ENCODE measurements at regions of chr9 and their contacts with region 1.

Region 1: GRCh38 chr9:122810306-122810946 is 10.5 kb downstream of the OR1K1 start:
- DNase-seq: peak; percentile 81

Region 2: GRCh38 chr9:122092611-122093506 is 717.6 kb before region 1 on chr9 and contains the start of gene TTLL11:
- intact Hi-C with region 1: loop called (anchors 10 kb)
- DNase-seq: peak; percentile 99
- total RNA-seq, gene TTLL11: 12.6 TPM

Region 3: DNA sequence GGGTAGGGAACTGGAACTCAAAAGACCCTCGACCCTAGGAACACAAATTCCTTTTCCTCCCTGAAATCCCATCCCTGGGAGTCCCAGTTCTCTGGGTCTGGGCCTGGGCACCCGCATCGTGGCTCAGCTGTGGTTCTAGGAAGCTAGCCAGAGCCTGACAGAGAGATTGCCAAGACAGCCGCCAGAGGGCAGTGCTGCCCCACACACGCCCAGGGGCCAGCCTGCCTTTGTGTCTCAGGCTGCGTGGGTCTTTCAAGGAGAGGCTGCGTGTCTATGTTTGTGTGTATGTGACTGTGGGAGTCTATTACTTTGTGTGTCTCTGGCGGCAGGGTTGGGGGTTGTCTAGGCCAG is 685.3 kb before region 1 on chr9:
- intact Hi-C with region 1: loop called (anchors 10 kb)
- DNase-seq: peak; percentile 89

Region 4: DNA sequence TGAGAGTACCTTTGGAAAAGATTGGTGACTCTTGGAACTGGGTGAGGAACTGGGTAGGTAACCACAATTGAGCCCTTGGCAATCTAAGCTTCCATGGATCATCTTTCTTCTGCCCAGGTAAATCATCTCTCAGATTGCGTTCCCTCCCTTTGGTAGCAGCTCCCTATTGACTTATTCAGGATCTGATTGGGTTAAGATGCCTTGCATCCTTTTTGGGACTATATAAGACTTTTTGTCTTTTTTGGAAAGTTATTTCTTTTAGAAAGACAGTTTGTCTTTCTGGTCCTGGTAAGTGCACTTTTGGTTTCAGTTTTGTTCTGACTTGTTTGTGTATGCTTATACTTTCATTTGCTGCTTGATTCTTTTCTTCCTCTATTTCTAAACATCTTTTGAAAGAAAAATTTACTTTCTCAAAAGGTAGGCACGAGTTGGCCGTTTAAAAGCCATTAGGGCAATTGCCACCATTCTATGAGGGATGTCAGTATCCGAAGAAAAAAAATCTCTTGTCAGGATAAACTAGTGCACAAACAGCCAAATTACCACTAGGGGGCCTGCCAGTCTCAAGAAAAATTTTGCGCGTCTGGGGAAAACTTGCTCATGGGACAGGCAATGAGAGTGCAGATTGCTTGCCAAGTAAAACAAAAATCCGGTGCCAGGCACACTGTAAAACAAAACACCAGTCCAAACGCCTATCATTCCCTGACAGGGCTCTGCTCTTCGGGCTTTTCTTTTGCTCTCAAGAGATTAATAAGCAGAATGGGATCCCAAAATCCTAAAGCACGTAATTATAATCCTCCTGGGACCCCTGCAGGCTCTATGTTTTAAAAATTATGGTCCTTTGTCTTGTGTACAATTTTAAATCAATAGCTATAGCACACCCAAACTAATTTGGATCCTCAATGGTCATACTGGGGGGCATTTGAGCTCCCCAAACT is 345.5 kb before region 1 on chr9:
- intact Hi-C with region 1: loop called (anchors 1 kb)
- DNase-seq: peak; percentile 77

Region 5: GRCh38 chr9:122846371-122846940 is 36.0 kb after region 1 on chr9:
- intact Hi-C with region 1: no loop called
- DNase-seq: no peak

Region 6: GRCh38 chr9:122865300-122865699 is 54.9 kb after region 1 on chr9:
- intact Hi-C with region 1: no loop called
- DNase-seq: no peak